Calu3 (cell line): ENCODE measurements at regions of chr18 and their contacts with region 1.

Region 1: DNA sequence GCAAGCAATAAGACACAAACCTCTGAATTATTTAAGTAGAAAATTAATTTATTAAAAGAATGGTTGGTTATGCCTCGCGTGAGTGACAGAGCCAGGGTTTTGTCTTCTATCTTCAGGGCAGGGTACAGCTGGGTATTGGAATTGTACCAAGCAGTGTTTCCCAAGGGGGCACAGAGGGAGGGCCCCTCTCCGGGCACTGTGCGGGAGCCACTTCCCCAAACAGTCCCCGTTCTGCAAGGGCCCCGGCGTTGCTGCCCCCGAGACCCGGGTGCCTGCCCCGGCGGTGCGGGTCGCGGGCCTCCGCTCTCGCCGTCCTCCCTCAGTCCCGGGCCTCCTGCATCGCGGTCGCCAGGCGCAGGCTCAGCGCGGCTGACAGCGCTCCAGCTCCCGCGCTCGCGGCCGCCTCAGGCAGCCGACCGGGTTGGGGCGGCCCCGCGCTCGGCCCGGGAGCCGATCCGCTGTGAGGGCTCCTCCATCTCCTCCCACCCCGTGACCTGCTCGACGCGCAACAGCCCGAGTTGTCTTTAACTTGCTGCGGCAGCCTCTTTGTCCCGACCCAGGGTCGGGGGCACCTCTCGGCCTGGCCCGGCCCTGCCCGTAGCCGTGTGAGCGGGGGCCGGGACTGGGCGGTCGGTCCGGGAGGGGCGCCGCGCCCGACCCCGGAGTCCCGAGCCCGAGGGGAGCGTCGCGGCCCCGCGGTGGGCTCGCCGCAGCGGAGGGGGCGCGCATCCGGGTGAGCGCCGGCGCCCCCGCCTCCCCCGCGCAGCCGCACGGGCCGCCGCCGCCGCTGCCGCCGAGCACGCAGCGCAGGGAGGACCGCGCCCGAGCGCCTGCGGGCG is 620 bp upstream of the GALNT1 start:
- DNase-seq: peak; percentile 50
- H3K4me3 Mint-ChIP-seq: peak overlapping the region; percentile 65
- H3K27ac Mint-ChIP-seq: no peak overlapping the region
- H3K4me1 Mint-ChIP-seq: peaks cover 53% of the 10 kb centered on the region
- H3K27me3 Mint-ChIP-seq: no peaks in the 10 kb centered on the region
- CTCF ChIP-seq: no peak

Region 2: DNA sequence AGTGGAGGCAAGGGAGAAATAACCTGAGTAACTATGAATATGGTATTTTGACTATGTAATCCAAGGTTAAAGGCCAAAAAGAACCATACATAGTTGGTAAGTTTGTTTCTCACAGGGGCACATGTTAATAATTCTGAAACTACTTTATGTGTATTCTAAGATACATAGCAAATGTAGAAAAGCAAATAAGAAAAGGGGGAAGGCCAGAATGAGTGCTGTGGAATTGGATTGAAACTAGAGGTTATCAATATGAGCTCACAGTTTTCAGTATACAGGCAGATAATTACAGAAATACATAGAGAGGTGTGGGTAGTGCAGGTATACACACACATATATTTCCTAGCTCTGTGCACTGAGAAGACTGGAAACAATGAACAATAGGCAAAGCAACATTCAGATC is 96.9 kb before region 1 on chr18:
- CTCF ChIA-PET with region 1: no interaction called
- intact Hi-C with region 1: loop called (anchors 5 kb)
- DNase-seq: no peak
- H3K4me3 Mint-ChIP-seq: no peak overlapping the region
- H3K27ac Mint-ChIP-seq: no peak overlapping the region
- H3K4me1 Mint-ChIP-seq: peaks cover 54% of the 10 kb centered on the region
- H3K27me3 Mint-ChIP-seq: no peaks in the 10 kb centered on the region
- CTCF ChIP-seq: no peak

Region 3: DNA sequence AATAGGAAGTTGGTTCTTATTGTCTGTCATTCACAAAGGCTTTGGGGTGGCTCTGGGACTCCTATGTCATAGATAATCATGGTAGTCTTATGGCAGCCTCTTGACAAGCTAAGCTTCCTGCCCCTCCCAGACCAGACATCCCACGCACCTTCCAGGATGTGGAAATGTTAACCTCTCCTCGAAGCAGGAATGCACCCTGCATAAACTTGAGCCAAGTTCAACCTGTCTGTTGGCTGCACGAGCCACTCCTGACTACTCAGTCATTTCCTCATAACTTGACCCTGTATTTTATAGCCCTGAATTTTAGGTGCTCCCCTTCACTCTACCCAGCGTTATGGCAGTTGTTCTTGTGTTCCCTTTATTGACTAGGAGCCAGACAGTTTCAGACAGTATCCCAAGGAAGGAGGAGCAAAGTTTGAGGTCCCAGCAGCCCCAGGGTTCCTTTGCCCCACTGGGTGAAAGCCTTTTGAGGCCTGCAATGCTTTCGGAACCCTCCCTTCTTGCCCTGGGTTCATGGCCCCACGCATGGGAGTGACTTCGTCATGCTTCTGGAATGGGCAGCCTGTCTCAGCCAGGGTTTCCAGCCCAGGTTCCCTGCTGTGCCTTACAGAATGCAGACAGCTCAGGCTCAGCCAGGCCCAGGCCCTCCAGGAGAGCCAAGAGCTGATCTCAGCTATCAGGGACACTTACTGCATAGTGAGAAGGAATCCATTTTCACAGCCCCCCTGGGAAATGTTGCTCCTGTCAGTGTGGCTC is 67.6 kb before region 1 on chr18:
- CTCF ChIA-PET with region 1: interaction called, 3 read pairs
- intact Hi-C with region 1: loop called (anchors 5 kb)
- DNase-seq: peak; percentile 64
- H3K4me3 Mint-ChIP-seq: peak overlapping the region; percentile 51
- H3K27ac Mint-ChIP-seq: peak overlapping the region; percentile 90
- H3K4me1 Mint-ChIP-seq: peaks cover 40% of the 10 kb centered on the region
- H3K27me3 Mint-ChIP-seq: no peaks in the 10 kb centered on the region
- CTCF ChIP-seq: no peak